Caco-2 (cell line): ENCODE measurements at regions of chr9 and their contacts with region 1.

Region 1: GRCh38 chr9:33924978-33925797 is 108.2 kb downstream of the UBE2R2 start:
- DNase-seq: peak in 1 of 2 experiments; percentile 67
- H3K4me3 ChIP-seq: no peak overlapping the region
- H3K4me3 Mint-ChIP-seq: no peak overlapping the region
- H3K27ac Mint-ChIP-seq: peak overlapping the region; percentile 21
- H3K4me1 ChIP-seq: no peaks in the 10 kb centered on the region
- H3K4me1 Mint-ChIP-seq: no peaks in the 10 kb centered on the region
- H3K27me3 ChIP-seq: no peaks in the 10 kb centered on the region
- H3K27me3 Mint-ChIP-seq: no peaks in the 10 kb centered on the region
- CTCF ChIP-seq: peak; percentile 39 to 66

Region 2: DNA sequence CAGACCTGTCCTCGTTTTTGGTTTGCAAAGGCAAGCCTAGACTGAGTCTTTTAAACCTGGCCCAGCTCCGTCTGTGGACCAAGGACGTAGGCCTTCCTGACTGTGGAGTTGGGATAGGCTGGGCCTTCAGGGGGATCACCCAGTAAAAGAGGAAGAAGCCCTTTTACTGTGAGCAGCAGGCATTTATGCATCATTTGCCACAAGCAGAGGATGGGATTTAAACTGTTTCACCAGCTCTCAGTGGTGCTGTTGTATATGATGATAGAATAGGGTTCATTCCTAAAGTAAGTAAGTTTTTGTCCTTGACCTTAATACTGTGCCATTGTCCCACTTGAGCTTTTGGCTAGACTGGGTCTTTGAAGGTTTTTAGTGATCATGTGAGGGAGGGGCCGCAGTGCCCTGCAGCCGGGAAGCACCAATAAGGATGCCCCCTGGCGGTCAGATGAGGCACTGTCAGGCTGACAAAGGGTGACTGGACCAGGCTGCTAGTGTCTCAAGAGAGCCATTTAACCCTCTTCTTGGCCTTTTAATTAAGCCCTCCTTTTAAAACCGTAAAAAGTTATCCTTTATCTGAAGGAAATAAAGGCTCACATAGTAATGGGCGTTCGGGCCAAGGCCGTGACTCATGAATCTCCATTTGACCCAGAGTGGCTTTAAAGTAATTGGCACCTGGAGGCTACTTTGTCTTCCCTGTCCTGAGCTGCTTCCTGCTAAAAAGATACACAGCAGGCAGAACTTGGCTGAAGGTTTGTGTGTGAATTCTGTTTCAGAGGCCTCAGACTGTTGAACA is 327.7 kb after region 1 on chr9:
- CTCF ChIA-PET with region 1: interaction called, 3 read pairs
- POLR2A ChIA-PET with region 1: no interaction called
- intact Hi-C with region 1: loop called (anchors 10 kb)
- DNase-seq: peak; percentile 70 to 80
- H3K4me3 ChIP-seq: no peak overlapping the region
- H3K4me3 Mint-ChIP-seq: no peak overlapping the region
- H3K27ac Mint-ChIP-seq: no peak overlapping the region
- H3K4me1 ChIP-seq: no peaks in the 10 kb centered on the region
- H3K4me1 Mint-ChIP-seq: no peaks in the 10 kb centered on the region
- H3K27me3 ChIP-seq: no peaks in the 10 kb centered on the region
- H3K27me3 Mint-ChIP-seq: no peaks in the 10 kb centered on the region
- CTCF ChIP-seq: peak; percentile 92 to 93